Activated T-helper 2 cell treated with anti-CD3 and anti-CD28 coated beads, Interferon-gamma antibody, Interleukin-2, Interleukin-4, amounts not matched to agents 10 μg/mL and 5 μg/mL and 100 μg/mL, durations not matched to agents 14 hours and 24 hours and 36 hours (primary cell): ENCODE measurements at regions of chr13 and their contacts with region 1.

Region 1: GRCh38 chr13:19959831-19960652 is 1.5 kb downstream of the ZMYM2 start:
- DNase-seq: peak; percentile 79
- H3K4me3 Mint-ChIP-seq: peak overlapping the region; percentile 95
- H3K27ac Mint-ChIP-seq: peak overlapping the region; percentile 98
- H3K4me1 Mint-ChIP-seq: peaks cover 28% of the 10 kb centered on the region
- H3K27me3 Mint-ChIP-seq: peaks cover 3% of the 10 kb centered on the region

Region 2: DNA sequence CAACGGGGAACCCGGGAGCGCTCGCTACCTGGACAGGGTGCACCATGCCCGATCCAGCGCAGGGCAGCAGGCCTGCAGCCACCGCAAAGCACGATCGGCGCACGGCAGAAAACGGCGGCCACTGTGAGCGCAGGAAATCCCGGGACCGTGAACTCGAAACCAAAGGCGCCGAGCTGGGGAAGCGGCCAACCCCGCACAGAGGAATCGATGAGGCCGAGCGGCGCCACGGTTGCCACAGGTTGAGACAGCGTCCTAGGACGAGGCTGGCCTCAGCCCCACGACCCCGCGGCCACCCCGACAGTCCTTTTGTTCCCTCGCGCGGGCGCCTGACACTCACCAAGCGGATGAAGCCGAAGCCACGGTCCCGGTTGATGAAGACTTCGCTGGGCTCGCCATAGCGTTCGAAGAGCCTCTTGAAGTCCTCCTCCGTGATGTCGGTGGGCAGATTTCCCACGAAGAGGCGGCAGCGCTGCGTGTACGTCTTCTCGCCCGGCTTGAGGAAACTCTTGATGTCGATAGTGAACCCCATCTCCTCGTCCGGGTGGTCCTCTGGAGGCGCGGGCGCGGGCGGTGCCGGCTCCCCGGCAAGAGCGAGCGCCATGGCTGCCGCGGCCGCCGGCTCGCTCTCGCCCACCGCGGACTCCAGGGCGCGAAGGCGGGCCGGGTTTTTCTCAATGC is 177.9 kb before region 1 on chr13:
- intact Hi-C with region 1: loop called (anchors 1 kb)
- DNase-seq: peak; percentile 62
- H3K4me3 Mint-ChIP-seq: peak overlapping the region; percentile 93
- H3K27ac Mint-ChIP-seq: peak overlapping the region; percentile 97
- H3K4me1 Mint-ChIP-seq: peaks cover 2% of the 10 kb centered on the region
- H3K27me3 Mint-ChIP-seq: peaks cover 1% of the 10 kb centered on the region

Region 3: GRCh38 chr13:19863323-19864023 is 96.6 kb before region 1 on chr13 and contains the start of gene ZMYM5:
- intact Hi-C with region 1: loop called (anchors 1 kb)
- DNase-seq: peak; percentile 96
- H3K4me3 Mint-ChIP-seq: peak within 1 kb of the TSS; percentile 98
- H3K27ac Mint-ChIP-seq: peak within 1 kb of the TSS; percentile 99
- H3K4me1 Mint-ChIP-seq: peaks cover 33% of the 10 kb centered on the region
- H3K27me3 Mint-ChIP-seq: no peaks in the 10 kb centered on the region
- total RNA-seq, gene ZMYM5: 13.7 and 16.1 TPM in 2 replicates

Region 4: GRCh38 chr13:20274439-20274838 is 314.4 kb after region 1 on chr13:
- intact Hi-C with region 1: no loop called
- DNase-seq: no peak
- H3K4me3 Mint-ChIP-seq: no peak overlapping the region
- H3K27ac Mint-ChIP-seq: no peak overlapping the region
- H3K4me1 Mint-ChIP-seq: peaks cover under 1% of the 10 kb centered on the region
- H3K27me3 Mint-ChIP-seq: peaks cover 15% of the 10 kb centered on the region

Region 5: GRCh38 chr13:20418953-20419352 is 458.9 kb after region 1 on chr13:
- intact Hi-C with region 1: loop called (anchors 1 kb)
- DNase-seq: no peak
- H3K4me3 Mint-ChIP-seq: no peak overlapping the region
- H3K27ac Mint-ChIP-seq: no peak overlapping the region
- H3K4me1 Mint-ChIP-seq: peaks cover 38% of the 10 kb centered on the region
- H3K27me3 Mint-ChIP-seq: no peaks in the 10 kb centered on the region